PC-3 (cell line): ENCODE measurements at regions of chrX and their contacts with region 1.

Region 1: GRCh38 chrX:125205133-125205917 is 114.3 kb upstream of the TEX13C start:
- DNase-seq: peak; percentile 66
- ATAC-seq: peak; percentile 64
- H3K4me3 ChIP-seq: peak overlapping the region; percentile 63
- H3K27ac ChIP-seq: peak overlapping the region; percentile 5; the same call in 1 of the 2 replicates
- H3K4me1 ChIP-seq: no peaks in the 10 kb centered on the region
- H3K27me3 ChIP-seq: peaks cover 35% of the 10 kb centered on the region
- CTCF ChIP-seq: peak; percentile 55; the same call in 1 of the 2 replicates

Region 2: DNA sequence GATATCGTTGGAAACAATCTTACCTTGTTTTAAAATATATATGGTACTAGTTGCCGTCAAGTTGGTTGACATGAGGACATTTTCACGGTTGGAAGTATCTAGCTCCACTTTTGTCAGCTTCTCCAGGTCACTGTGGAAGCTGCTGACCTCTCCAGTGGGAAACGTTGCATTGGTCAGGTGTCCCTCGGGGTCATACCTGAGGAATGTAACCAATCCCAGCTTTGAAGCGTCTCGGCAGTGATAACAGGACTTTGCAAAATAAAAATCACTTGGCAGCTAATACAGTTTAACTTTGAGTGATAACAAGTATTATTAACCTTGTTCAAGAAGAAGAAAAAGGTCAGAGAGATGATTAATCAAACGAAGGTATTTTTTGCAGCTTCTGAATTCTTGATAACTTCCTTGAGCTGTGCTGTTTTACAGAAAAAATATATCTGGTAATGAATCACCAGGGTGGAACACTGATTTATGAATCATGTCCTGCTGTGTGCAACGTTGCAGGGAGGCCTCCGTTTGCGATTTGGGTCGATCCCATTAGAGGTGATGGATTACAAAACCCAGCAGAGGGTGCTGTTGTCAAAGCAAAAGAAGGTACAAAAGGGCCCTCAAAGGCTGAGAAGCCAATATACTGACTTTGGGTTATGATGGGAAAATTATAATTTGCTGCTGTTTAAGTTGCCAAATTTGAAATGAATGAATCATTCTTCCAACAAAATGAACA is 798.9 kb before region 1 on chrX:
- CTCF ChIA-PET with region 1: no interaction called
- POLR2A ChIA-PET with region 1: no interaction called
- intact Hi-C with region 1: loop called (anchors 5 kb)
- DNase-seq: peak; percentile 93
- ATAC-seq: peak; percentile 94
- H3K4me3 ChIP-seq: peak overlapping the region; percentile 20; the same call in 1 of the 2 replicates
- H3K27ac ChIP-seq: peak overlapping the region; percentile 34
- H3K4me1 ChIP-seq: peaks cover 11% of the 10 kb centered on the region
- H3K27me3 ChIP-seq: no peaks in the 10 kb centered on the region
- CTCF ChIP-seq: peak; percentile 78

Region 3: GRCh38 chrX:125132285-125132684 is 73.0 kb before region 1 on chrX:
- CTCF ChIA-PET with region 1: no interaction called
- POLR2A ChIA-PET with region 1: no interaction called
- intact Hi-C with region 1: loop called (anchors 1 kb)
- DNase-seq: peak; percentile 53
- ATAC-seq: no peak
- H3K4me3 ChIP-seq: no peak overlapping the region
- H3K27ac ChIP-seq: no peak overlapping the region
- H3K4me1 ChIP-seq: no peaks in the 10 kb centered on the region
- H3K27me3 ChIP-seq: no peaks in the 10 kb centered on the region
- CTCF ChIP-seq: peak; percentile 78

Region 4: GRCh38 chrX:125170459-125170858 is 34.9 kb before region 1 on chrX:
- CTCF ChIA-PET with region 1: no interaction called
- POLR2A ChIA-PET with region 1: no interaction called
- intact Hi-C with region 1: no loop called
- DNase-seq: no peak
- ATAC-seq: no peak
- H3K4me3 ChIP-seq: no peak overlapping the region
- H3K27ac ChIP-seq: no peak overlapping the region
- H3K4me1 ChIP-seq: no peaks in the 10 kb centered on the region
- H3K27me3 ChIP-seq: no peaks in the 10 kb centered on the region
- CTCF ChIP-seq: no peak

Region 5: GRCh38 chrX:125295337-125295736 is 90.0 kb after region 1 on chrX:
- CTCF ChIA-PET with region 1: no interaction called
- POLR2A ChIA-PET with region 1: no interaction called
- intact Hi-C with region 1: loop called (anchors 10 kb)
- DNase-seq: peak; percentile 70
- ATAC-seq: peak; percentile 60
- H3K4me3 ChIP-seq: no peak overlapping the region
- H3K27ac ChIP-seq: peak overlapping the region; percentile 82
- H3K4me1 ChIP-seq: peaks cover 43% of the 10 kb centered on the region
- H3K27me3 ChIP-seq: no peaks in the 10 kb centered on the region
- CTCF ChIP-seq: no peak

Region 6: GRCh38 chrX:125327891-125328290 is 122.6 kb after region 1 on chrX:
- CTCF ChIA-PET with region 1: no interaction called
- POLR2A ChIA-PET with region 1: no interaction called
- intact Hi-C with region 1: loop called (anchors 2 kb)
- DNase-seq: no peak
- ATAC-seq: no peak
- H3K4me3 ChIP-seq: no peak overlapping the region
- H3K27ac ChIP-seq: no peak overlapping the region
- H3K4me1 ChIP-seq: peaks cover 11% of the 10 kb centered on the region; the same call in 1 of the 2 replicates
- H3K27me3 ChIP-seq: no peaks in the 10 kb centered on the region
- CTCF ChIP-seq: no peak